Activated CD4-positive, alpha-beta T cell treated with anti-CD3 and anti-CD28 coated beads, Interleukin-2, amount 10 ng/mL, durations not matched to agents 7 days and 5 days (primary cell): ENCODE measurements at regions of chr9 and their contacts with region 1.

Region 1: DNA sequence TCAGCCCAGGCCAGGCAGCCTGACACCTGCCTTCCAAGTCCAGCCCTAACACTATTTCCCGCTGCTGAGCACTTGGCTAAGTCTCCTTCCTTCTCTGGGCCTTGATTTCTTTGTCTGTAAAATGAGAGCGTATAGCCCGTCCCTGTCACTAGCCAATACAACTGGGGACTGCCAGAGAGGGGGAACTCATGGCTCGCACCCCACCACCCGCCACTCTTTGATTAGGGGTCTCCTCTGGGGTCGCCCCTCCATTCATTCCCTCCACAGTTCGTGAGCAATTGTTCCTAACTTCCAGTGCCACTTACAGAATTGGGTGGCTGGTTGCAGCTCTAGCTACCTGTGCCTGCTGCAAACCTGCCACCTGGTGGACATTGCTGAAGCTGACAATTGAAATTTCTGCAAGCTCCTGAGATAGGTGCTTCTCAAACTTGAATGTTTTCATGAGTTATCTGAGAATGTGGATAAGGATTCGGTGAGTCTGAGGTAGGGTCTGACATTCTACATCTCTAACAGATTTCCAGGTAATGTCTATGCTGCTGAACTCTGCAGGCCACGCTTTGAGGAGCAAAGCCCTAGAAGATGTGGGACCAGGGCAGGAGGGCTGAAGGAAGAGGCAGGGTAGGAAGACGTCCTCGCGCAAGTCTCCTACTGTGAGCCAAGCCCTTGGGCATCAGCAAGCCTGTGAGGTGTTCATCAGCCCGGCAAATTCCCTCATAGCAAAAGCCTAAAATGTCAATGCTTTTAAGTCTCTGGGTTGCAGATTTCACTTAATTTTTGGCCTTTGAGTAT is 13.3 kb upstream of the RECK start:
- DNase-seq: peak; percentile 77
- H3K4me3 Mint-ChIP-seq: no peak overlapping the region
- H3K27ac Mint-ChIP-seq: no peak overlapping the region
- H3K4me1 Mint-ChIP-seq: no peaks in the 10 kb centered on the region
- H3K27me3 Mint-ChIP-seq: peaks cover 1% of the 10 kb centered on the region

Region 2: GRCh38 chr9:35954942-35955546 is 68.4 kb before region 1 on chr9:
- CTCF ChIA-PET with region 1: interaction called, 11 read pairs
- POLR2A ChIA-PET with region 1: no interaction called
- DNase-seq: peak; percentile 66
- H3K4me3 Mint-ChIP-seq: no peak overlapping the region
- H3K27ac Mint-ChIP-seq: no peak overlapping the region
- H3K4me1 Mint-ChIP-seq: no peaks in the 10 kb centered on the region
- H3K27me3 Mint-ChIP-seq: peaks cover 13% of the 10 kb centered on the region

Region 3: DNA sequence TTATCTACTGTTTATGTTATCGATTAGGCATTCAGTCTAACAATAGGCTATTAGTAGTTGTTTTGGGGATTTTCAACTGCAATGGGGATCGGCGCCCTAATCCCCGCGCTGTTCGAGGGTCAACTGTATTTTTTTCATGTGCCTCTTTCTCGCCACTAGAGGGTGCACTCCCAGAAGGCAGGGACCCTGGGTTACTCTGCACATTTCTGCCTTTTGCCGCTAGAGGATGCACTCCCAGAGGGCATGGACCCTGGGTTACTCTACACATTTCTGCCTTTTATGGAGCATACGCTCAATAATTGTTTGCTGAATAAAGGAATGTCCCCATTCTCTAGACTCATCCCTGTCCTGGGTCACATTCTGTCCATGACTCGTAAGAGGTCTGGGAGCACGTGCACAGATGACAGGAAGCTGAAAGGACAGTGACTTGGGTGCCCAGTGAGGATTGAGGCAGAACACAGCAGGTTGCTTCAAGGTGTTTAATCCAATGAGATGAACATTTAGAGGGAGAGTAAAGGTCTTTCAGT is 14.6 kb before region 1 on chr9:
- CTCF ChIA-PET with region 1: interaction called, 12 read pairs
- POLR2A ChIA-PET with region 1: no interaction called
- DNase-seq: peak; percentile 72
- H3K4me3 Mint-ChIP-seq: no peak overlapping the region
- H3K27ac Mint-ChIP-seq: no peak overlapping the region
- H3K4me1 Mint-ChIP-seq: peaks cover 19% of the 10 kb centered on the region
- H3K27me3 Mint-ChIP-seq: peaks cover 48% of the 10 kb centered on the region

Region 4: GRCh38 chr9:36237230-36237629 is 213.8 kb after region 1 on chr9:
- CTCF ChIA-PET with region 1: no interaction called
- POLR2A ChIA-PET with region 1: no interaction called
- DNase-seq: no peak
- H3K4me3 Mint-ChIP-seq: no peak overlapping the region
- H3K27ac Mint-ChIP-seq: no peak overlapping the region
- H3K4me1 Mint-ChIP-seq: peaks cover 2% of the 10 kb centered on the region
- H3K27me3 Mint-ChIP-seq: no peaks in the 10 kb centered on the region